Activated T-helper 2 cell treated with anti-CD3 and anti-CD28 coated beads, Interferon-gamma antibody, Interleukin-2, Interleukin-4, amounts not matched to agents 10 μg/mL and 5 μg/mL and 100 μg/mL, durations not matched to agents 14 hours and 24 hours and 36 hours (primary cell): ENCODE measurements at regions of chr21 and their contacts with region 1.

Region 1: GRCh38 chr21:30044445-30045064 is 104.8 kb upstream of the GRIK1 start:
- DNase-seq: no peak
- H3K4me3 Mint-ChIP-seq: no peak overlapping the region
- H3K27ac Mint-ChIP-seq: no peak overlapping the region
- H3K4me1 Mint-ChIP-seq: no peaks in the 10 kb centered on the region
- H3K27me3 Mint-ChIP-seq: no peaks in the 10 kb centered on the region

Region 2: DNA sequence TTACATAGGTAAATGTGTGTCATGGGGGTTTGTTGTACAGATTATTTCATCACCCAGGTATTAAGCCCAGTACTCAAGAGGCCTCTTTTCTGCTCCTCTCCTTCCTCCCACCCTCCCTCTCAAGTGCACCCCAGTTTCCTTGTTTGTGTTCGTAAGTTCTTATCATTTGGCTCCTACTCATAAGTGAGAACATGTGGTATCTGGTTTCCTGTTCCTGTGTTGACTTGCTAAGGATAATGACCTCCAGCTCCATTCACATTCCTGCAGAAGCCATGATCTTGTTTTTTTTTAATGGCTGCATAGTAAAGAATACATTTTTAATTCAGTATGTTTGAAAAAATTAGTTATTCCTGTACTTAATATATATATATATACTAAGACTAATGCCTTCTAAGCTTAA is 14.4 kb after region 1 on chr21:
- intact Hi-C with region 1: no loop called
- DNase-seq: no peak
- H3K4me3 Mint-ChIP-seq: no peak overlapping the region
- H3K27ac Mint-ChIP-seq: no peak overlapping the region
- H3K4me1 Mint-ChIP-seq: no peaks in the 10 kb centered on the region
- H3K27me3 Mint-ChIP-seq: no peaks in the 10 kb centered on the region

Region 3: GRCh38 chr21:30194701-30195299 is 150.2 kb after region 1 on chr21:
- intact Hi-C with region 1: loop called (anchors 10 kb)
- DNase-seq: no peak
- H3K4me3 Mint-ChIP-seq: no peak overlapping the region
- H3K27ac Mint-ChIP-seq: no peak overlapping the region
- H3K4me1 Mint-ChIP-seq: no peaks in the 10 kb centered on the region
- H3K27me3 Mint-ChIP-seq: no peaks in the 10 kb centered on the region